Activated naive CD4-positive, alpha-beta T cell treated with anti-CD3 and anti-CD28 coated beads for 36 hours (primary cell): ENCODE measurements at regions of chr21 and their contacts with region 1.

Region 1: DNA sequence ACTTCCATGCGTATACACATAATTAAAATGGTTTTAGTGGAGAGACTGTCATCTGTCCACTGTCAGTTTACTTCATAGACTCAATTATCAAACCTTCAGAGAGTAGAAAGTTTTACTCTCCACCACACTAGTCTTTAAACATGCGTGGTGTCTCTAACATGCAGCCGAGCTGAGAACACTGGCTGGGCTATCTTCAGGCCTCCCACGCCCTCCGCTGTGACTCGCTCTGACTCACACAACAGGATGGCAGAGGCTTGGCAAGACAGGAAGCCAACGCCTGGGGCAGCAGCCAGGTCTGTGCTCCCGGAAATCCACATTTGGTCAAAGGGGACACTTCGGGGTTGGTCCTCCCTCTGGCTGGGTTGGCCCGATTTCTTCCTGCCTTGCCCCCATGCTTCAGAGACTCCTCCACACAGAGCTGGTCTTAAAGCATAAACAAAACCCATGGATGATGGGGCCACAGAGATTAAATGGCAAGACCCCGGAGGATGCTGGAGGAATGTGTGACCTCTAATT is 22.7 kb upstream of the IFNGR2 start:
- DNase-seq: peak; percentile 98
- H3K4me3 Mint-ChIP-seq: peak overlapping the region; percentile 39
- H3K27ac Mint-ChIP-seq: peak overlapping the region; percentile 71
- H3K4me1 Mint-ChIP-seq: peaks cover 63% of the 10 kb centered on the region
- H3K27me3 Mint-ChIP-seq: peaks cover under 1% of the 10 kb centered on the region

Region 2: GRCh38 chr21:32929633-32930038 is 450.9 kb before region 1 on chr21:
- CTCF ChIA-PET with region 1: no interaction called
- intact Hi-C with region 1: loop called (anchors 2 kb)
- DNase-seq: peak; percentile 22
- H3K4me3 Mint-ChIP-seq: no peak overlapping the region
- H3K27ac Mint-ChIP-seq: peak overlapping the region; percentile 20
- H3K4me1 Mint-ChIP-seq: peaks cover 36% of the 10 kb centered on the region
- H3K27me3 Mint-ChIP-seq: no peaks in the 10 kb centered on the region

Region 3: DNA sequence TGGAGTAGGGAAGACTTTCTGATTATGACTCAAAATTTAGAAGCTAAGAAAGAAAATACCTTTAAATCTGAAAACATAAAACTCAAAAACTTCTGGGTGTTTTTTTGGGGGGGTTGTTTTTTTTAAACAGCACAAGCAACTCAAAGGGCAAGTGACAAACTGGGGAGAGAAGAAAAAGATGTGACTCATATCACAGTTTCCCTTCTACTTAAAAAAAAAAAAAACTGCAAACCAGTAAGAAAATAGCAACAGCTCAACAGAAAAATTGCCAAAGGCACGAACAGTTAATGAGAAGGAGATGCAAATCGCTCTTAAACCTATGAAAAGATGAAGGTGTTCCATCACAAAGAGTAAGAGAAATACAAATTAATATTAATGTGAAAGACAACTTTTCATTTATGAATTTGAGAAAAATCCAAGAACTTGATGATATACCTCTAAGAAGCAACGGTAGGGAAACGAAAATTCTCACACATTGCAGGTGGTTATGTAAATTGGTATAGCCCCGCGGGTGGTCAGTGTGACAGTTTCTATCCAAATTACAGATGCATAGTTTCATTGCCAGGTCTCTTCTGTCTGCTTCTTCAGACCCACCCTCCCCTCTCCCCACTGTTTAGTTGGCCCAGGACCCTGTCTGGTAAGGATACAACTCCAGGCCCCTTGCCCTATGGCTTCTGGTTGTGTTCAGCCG is 141.8 kb before region 1 on chr21:
- CTCF ChIA-PET with region 1: no interaction called
- intact Hi-C with region 1: loop called (anchors 2 kb)
- DNase-seq: no peak
- H3K4me3 Mint-ChIP-seq: peak overlapping the region; percentile 3
- H3K27ac Mint-ChIP-seq: peak overlapping the region; percentile 76
- H3K4me1 Mint-ChIP-seq: peaks cover 80% of the 10 kb centered on the region
- H3K27me3 Mint-ChIP-seq: no peaks in the 10 kb centered on the region

Region 4: GRCh38 chr21:33324291-33325221 is 56.0 kb before region 1 on chr21 and contains the start of gene IFNAR1:
- CTCF ChIA-PET with region 1: no interaction called
- intact Hi-C with region 1: loop called (anchors 1 kb)
- DNase-seq: peak; percentile 99
- H3K4me3 Mint-ChIP-seq: no peak within 1 kb of the TSS
- H3K27ac Mint-ChIP-seq: no peak within 1 kb of the TSS
- H3K4me1 Mint-ChIP-seq: peaks cover 28% of the 10 kb centered on the region
- H3K27me3 Mint-ChIP-seq: no peaks in the 10 kb centered on the region
- total RNA-seq, gene IFNAR1: 20.6 to 24.3 TPM

Region 5: GRCh38 chr21:33434770-33435360 is 54.3 kb after region 1 on chr21:
- CTCF ChIA-PET with region 1: interaction called, 4 read pairs
- intact Hi-C with region 1: loop called (anchors 1 kb)
- DNase-seq: peak; percentile 43
- H3K4me3 Mint-ChIP-seq: peak overlapping the region; percentile 25
- H3K27ac Mint-ChIP-seq: peak overlapping the region; percentile 76
- H3K4me1 Mint-ChIP-seq: peaks cover 29% of the 10 kb centered on the region
- H3K27me3 Mint-ChIP-seq: no peaks in the 10 kb centered on the region

Region 6: GRCh38 chr21:33542640-33543504 is 162.3 kb after region 1 on chr21 and contains the start of gene SON:
- CTCF ChIA-PET with region 1: no interaction called
- intact Hi-C with region 1: loop called (anchors 1 kb)
- DNase-seq: peak; percentile 99
- H3K4me3 Mint-ChIP-seq: peak within 1 kb of the TSS; percentile 90
- H3K27ac Mint-ChIP-seq: peak within 1 kb of the TSS; percentile 99
- H3K4me1 Mint-ChIP-seq: peaks cover 34% of the 10 kb centered on the region
- H3K27me3 Mint-ChIP-seq: no peaks in the 10 kb centered on the region
- total RNA-seq, gene SON: 269 to 273 TPM

Region 7: GRCh38 chr21:33976082-33977016 is 595.8 kb after region 1 on chr21:
- CTCF ChIA-PET with region 1: no interaction called
- intact Hi-C with region 1: loop called (anchors 5 kb)
- DNase-seq: peak; percentile 83
- H3K4me3 Mint-ChIP-seq: peak overlapping the region; percentile 70
- H3K27ac Mint-ChIP-seq: peak overlapping the region; percentile 99
- H3K4me1 Mint-ChIP-seq: peaks cover 52% of the 10 kb centered on the region
- H3K27me3 Mint-ChIP-seq: no peaks in the 10 kb centered on the region